Ovary (tissue), 10 donors: ENCODE measurements at regions of chr11 and their contacts with region 1.

Region 1: GRCh38 chr11:8033305-8034105 is 46.4 kb downstream of the EIF3F start:
- DNase-seq: peak; percentile 87 to 92 (median 88)
- H3K4me3 ChIP-seq: no peak overlapping the region
- H3K27ac ChIP-seq: no peak overlapping the region
- H3K4me1 ChIP-seq: peaks cover 9% of the 10 kb centered on the region
- H3K27me3 ChIP-seq: no peaks in the 10 kb centered on the region
- CTCF ChIP-seq: peak; percentile 80 to 92 (median 87)
- EP300 ChIP-seq: no peak
- POLR2A ChIP-seq: no peak

Region 2: DNA sequence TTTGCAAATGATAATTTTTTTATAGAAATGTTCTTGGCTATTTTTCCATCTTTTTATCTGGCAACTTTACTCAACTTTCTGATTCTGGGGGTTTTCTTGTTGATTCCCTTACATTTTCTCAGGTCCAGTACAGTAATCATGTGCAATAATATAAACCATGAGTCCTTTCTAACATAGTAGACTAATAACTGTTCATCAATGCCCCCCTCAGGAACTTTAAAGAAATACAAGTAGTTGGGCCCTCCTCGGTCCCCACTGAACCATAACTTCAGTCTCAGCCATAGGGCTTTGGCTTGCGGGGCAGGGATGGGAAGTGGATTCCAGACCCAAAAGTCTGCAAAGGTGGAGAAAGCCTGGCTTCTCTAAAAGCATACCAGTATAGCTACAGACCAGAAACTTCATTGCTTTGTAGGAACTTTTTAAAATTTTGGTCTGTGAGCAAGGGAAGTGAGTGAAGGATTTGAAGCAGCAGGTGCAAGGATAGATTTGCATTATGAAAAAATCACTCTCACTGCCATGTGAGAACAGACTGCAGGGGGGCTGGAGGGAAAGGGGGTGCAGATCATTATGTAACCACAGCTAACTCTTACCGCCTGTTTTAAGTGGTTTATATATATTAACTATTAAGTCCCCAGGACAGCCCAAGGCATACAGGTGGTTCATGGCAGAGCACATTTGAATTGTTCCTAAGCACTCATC is 37.1 kb after region 1 on chr11:
- intact Hi-C with region 1: loop called in 1 of 4 experiments (anchors 5 kb)
- DNase-seq: no peak
- H3K4me3 ChIP-seq: no peak overlapping the region
- H3K27ac ChIP-seq: no peak overlapping the region
- H3K4me1 ChIP-seq: peaks cover 10% of the 10 kb centered on the region
- H3K27me3 ChIP-seq: no peaks in the 10 kb centered on the region
- CTCF ChIP-seq: no peak
- EP300 ChIP-seq: no peak
- POLR2A ChIP-seq: no peak

Region 3: DNA sequence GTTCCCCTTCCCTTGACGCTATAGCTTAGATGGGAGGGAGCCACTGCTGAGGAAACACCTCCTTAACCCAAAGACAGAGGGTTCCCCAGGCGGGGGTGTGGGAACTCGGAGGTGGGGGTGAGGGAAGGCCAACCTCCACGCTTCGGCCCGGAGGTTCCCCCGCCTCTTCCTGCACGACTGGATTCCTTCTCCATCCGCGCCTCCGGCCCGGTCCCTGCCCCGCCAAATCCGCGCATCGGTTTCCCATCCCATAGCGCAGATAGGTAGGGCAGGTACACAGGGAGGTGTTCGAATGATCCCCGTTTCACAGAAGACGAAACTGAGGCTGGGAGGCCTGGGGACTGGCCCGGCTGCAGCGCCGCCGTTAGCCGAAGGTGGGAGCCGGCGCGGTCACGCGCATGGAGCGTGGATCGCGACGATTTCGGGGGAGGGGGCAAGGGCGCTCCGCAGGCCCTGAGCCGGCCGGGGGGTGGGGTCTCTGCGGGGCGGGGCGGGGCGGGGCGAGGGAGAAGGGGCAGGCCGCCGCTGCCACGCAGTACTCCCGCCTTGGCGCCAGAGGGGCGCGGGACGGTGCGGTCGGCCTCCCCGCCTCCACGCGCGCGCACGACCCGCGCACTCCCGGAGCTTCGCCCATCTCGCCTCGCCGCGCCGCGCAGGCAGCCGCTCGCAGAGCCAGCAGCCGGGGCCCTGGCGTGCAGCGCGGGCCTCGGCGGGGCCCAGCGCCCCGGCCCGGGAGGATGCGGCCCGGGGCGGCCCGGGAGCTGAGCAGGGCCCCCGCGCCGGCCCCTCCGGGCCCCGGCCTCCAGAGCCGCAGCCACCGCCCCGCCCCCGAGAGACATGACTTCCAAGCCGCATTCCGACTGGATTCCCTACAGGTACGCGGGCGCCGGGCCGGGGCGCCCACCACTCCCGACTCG is 47.4 kb after region 1 on chr11 and contains the start of gene TUB:
- intact Hi-C with region 1: loop called in 2 of 4 experiments (anchors 5 kb)
- DNase-seq: peak; percentile 41 to 65 (median 64)
- H3K4me3 ChIP-seq: peak within 1 kb of the TSS; percentile 57
- H3K27ac ChIP-seq: peak within 1 kb of the TSS; percentile 27 to 74
- H3K4me1 ChIP-seq: peaks cover 7% of the 10 kb centered on the region
- H3K27me3 ChIP-seq: no peaks in the 10 kb centered on the region
- CTCF ChIP-seq: no peak
- EP300 ChIP-seq: no peak
- POLR2A ChIP-seq: no peak
- total RNA-seq, gene TUB: 10.5 to 33.4 (median 25.7) TPM

Region 4: DNA sequence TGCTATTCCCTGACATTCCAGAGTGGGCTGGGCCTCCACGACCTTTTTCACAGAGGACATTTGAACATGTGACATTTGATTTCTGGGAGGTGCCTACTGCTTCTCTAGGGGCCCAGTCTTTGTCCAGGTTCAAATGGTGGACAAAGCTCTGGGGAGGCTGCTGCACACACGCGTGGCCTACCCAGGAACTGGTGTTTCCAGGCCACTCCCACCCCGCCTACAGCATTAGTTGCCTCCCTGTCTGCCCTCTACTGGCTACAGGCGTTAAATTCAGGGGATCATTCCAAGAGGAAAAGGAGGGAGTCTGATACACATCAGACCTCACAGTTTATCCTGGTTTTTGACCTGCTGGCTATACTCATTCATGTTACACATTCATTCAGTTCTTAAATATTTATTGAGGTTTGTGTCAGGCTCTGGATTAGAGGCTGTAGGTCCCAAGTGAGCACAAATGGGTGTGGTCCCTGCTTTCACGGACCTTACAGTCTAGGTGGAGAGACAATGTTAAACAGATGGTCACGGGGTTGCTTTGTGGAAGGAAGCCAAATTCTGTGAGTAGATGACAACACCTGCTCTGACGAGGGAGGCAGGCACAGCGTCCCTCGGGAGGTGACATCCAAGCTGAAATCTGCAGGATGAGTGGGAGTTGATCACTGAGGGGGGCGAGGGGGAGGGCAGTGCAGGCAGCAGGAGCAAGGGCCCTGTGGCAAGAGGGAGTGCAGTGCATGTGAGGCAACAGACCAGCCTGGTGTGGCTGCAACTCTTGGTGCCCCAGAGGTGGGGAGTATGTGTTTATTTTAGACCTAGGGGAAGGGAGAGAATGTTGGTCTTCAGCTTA is 59.3 kb after region 1 on chr11:
- intact Hi-C with region 1: loop called in 2 of 4 experiments (anchors 2 to 5 kb)
- DNase-seq: peak in 4 of 5 donors; percentile 65 to 73 (median 67)
- H3K4me3 ChIP-seq: no peak overlapping the region
- H3K27ac ChIP-seq: no peak overlapping the region
- H3K4me1 ChIP-seq: no peaks in the 10 kb centered on the region
- H3K27me3 ChIP-seq: no peaks in the 10 kb centered on the region
- CTCF ChIP-seq: peak in 2 of 3 donors; percentile 38 to 49
- EP300 ChIP-seq: no peak
- POLR2A ChIP-seq: no peak

Region 5: GRCh38 chr11:8111636-8112035 is 78.1 kb after region 1 on chr11:
- intact Hi-C with region 1: no loop called
- DNase-seq: no peak
- H3K4me3 ChIP-seq: no peak overlapping the region
- H3K27ac ChIP-seq: no peak overlapping the region
- H3K4me1 ChIP-seq: peaks cover 2% of the 10 kb centered on the region
- H3K27me3 ChIP-seq: no peaks in the 10 kb centered on the region
- CTCF ChIP-seq: no peak
- EP300 ChIP-seq: no peak
- POLR2A ChIP-seq: no peak